RWPE1 (cell line): ENCODE measurements at regions of chr17 and their contacts with region 1.

Region 1: DNA sequence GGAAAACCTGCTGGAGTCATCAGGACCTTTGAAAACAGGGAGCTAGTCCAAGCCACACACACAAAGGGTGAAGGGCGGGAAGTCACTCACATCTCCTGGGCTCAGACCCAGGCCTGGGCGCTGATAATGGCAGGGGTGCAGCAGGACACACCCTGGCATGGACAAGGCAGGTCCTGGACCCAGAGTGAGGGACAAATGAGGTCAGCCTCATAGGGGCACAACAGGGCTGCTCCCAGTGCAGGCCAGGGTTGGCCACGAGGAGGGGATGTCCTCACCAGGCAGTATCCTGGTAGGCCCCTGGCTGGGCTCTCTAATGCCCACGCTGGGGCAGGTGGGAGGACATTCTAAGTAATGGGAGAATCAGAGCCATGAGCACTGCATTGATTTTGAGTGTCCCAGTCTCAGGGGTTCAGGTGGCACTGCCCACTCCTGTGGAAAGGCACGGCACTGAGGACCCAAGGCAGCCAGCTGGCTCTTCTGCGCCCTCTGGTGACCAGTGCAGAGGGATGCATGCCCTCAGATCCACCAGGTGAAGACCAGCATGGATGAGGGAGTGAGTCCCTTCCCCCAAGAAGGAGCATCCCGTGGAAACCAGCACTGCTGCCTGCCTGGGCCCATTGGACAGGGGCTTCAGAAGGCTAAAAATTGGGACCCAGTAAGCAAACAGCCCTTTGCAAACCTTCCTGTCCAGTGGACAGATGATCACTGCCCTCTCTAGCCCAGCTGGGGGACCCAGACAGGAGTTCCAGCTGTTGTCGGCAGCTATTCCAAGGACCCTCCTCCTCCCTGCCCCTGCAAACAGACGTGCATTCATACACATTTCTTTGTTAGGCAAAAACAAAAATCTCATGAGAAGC is 23.4 kb upstream of the SREBF1 start:
- DNase-seq: peak; percentile 74
- H3K27ac ChIP-seq: peak overlapping the region; percentile 60
- CTCF ChIP-seq: peak; percentile 94

Region 2: GRCh38 chr17:17812211-17813057 is 47.7 kb before region 1 on chr17:
- CTCF ChIA-PET with region 1: interaction called, 21 read pairs
- POLR2A ChIA-PET with region 1: no interaction called
- DNase-seq: peak; percentile 77
- H3K27ac ChIP-seq: peak overlapping the region; percentile 97
- CTCF ChIP-seq: peak; percentile 96

Region 3: DNA sequence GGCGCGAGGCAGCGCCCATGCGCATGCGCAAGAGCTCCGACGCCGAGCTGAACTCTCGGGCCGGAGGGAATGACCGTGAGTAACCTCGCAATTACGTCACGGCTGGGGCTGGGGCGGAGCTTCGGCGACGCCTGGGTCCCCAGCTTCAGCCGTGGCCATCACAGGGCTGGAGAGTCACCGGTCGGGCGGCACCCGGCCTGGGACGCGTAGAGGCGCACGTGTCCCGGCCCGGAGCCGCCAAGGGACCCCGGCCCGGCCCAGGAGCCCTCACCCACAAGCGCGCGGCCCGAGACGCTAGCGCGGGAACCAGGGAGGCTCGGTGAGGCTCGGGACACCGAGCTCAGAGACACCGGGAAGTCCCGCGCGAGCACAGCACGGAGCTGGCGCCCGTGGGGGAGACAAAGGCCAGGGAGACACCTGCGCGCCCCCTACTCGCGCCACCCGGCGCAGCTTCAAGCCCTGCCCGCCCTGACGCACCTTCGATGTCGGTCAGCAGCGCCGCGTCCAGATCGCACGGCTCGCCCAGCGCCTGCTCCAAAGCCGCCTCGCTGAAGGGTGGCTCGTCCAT is 23.8 kb before region 1 on chr17:
- CTCF ChIA-PET with region 1: interaction called, 14 read pairs
- POLR2A ChIA-PET with region 1: interaction called, 3 read pairs
- DNase-seq: peak; percentile 95
- H3K27ac ChIP-seq: peak overlapping the region; percentile 100
- CTCF ChIP-seq: no peak

Region 4: DNA sequence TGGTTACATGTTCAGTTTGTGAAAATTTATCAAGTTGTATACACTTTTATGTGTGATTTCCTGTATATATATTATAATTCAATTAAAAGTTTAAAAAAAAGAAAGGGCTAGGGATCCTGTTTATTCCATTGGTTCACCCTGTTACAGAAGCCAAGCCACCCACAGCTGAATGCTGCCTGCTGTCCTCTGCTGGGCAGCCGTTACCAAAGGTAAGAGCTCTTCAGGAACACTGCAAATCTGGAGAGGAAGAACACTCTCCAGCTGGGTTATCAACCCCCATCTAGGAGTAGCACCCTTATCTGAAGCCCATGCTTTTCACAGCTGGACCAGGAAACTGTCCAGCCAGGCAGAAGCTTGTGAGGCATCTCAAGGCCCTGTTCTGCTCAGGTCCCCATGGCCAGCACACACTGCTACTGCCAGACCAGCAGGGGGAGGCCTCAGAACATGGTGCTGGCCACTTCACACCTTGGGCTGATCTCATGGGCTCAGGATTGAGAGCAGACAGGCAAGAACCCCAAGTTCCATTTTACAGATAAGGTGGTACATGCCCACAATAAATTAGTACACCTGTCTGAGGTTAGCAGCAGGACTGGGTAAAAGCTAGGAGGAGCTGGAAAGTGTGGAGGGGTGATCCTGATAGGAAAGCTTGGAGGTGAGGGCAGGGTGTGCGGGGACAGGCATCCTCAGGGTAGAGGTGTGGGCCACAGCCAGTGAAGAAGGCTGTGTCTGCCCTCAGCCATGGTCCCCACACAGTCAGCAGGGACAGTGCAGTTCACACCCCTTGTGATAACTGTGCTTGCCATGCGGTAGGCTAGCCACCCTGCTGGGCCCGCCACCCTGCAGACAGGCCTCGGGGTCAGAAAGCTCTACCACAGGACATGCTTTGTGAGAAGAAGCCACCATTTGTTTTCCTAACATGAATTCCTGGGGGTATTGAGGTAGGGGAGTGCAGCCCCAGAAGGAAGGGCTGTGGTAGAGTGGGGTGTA is 30.9 kb after region 1 on chr17:
- CTCF ChIA-PET with region 1: no interaction called
- POLR2A ChIA-PET with region 1: no interaction called
- DNase-seq: peak; percentile 73
- H3K27ac ChIP-seq: peak overlapping the region; percentile 33
- CTCF ChIP-seq: peak; percentile 80

Region 5: DNA sequence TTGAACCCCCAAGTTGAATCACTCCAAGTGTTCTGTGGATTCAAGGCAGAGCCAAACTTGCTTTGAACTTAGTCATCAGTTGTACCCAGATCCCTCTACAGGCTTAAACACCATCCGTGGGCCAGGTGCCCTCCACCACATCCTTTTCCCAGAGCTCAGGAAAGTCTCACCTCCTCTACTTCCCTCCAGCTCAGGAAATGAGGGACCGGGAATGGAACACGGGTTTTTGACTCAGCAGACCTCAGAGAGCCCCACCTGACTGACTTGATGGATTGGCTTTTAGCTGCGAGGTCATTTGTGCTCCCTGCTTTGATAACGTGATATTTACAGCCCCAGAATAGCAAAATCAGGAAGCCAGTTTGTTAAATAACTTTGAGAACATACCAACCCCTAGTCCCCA is 199.1 kb after region 1 on chr17:
- CTCF ChIA-PET with region 1: no interaction called
- POLR2A ChIA-PET with region 1: no interaction called
- DNase-seq: no peak
- H3K27ac ChIP-seq: peak overlapping the region; percentile 16
- CTCF ChIP-seq: no peak